MCF 10A (cell line): ENCODE measurements at regions of chr17 and their contacts with region 1.

Region 1: DNA sequence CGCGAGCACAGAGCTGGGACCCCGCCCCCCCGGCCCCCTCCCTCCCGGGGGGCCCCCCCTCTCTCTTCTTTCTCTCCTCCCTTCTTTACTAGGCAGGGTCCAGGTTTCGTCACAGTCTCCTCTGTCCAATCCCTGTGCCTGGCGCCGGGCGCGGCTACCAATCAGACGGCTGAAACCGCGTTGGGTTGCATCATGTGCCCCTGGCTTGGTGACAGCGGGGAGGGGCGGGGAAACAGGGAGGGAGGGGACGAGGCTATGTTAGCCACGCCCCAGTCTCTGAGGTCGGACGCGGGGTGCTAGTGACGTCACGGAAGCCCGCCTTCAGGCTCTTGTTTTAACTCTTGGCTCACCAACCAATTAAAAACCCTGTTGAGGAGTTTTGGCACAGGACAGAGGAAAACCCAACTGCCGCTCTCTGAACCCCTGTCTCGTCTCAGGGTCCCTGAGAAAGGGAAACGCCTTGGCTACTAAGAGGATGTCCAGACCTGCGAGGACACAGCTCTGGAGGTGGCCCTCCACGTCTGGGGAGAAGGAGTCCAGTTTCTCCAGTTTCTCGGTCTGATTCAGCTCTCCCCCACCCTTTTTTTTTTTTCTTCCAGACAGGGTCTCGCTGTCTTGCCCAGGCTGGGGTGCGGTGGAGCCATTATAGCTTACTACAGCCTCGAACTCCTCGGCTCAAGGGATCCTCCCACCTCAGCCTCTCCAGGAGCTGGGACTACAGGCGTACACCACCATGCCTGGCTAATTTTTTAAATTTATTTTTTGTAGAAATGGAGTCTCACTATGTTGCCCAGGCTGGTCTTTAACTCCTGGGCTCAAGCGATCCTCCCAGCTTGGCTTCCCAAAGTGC is 439 bp upstream of the PLEKHH3 start:
- DNase-seq: peak; percentile 100
- H3K4me3 Mint-ChIP-seq: peak overlapping the region; percentile 86
- H3K27ac Mint-ChIP-seq: peak overlapping the region; percentile 42
- H3K4me1 Mint-ChIP-seq: peaks cover 22% of the 10 kb centered on the region
- H3K27me3 Mint-ChIP-seq: no peaks in the 10 kb centered on the region
- CTCF ChIP-seq: no peak

Region 2: GRCh38 chr17:42566883-42567573 is 110.2 kb before region 1 on chr17 and contains the start of gene MLX:
- CTCF ChIA-PET with region 1: no interaction called
- POLR2A ChIA-PET with region 1: interaction called, 10 read pairs
- intact Hi-C with region 1: no loop called
- DNase-seq: peak; percentile 90
- H3K4me3 Mint-ChIP-seq: peak within 1 kb of the TSS; percentile 79
- H3K27ac Mint-ChIP-seq: peak within 1 kb of the TSS; percentile 90
- H3K4me1 Mint-ChIP-seq: peaks cover 13% of the 10 kb centered on the region
- H3K27me3 Mint-ChIP-seq: no peaks in the 10 kb centered on the region
- CTCF ChIP-seq: no peak
- total RNA-seq, gene MLX: 37.3 and 39.6 TPM in 2 replicates

Region 3: DNA sequence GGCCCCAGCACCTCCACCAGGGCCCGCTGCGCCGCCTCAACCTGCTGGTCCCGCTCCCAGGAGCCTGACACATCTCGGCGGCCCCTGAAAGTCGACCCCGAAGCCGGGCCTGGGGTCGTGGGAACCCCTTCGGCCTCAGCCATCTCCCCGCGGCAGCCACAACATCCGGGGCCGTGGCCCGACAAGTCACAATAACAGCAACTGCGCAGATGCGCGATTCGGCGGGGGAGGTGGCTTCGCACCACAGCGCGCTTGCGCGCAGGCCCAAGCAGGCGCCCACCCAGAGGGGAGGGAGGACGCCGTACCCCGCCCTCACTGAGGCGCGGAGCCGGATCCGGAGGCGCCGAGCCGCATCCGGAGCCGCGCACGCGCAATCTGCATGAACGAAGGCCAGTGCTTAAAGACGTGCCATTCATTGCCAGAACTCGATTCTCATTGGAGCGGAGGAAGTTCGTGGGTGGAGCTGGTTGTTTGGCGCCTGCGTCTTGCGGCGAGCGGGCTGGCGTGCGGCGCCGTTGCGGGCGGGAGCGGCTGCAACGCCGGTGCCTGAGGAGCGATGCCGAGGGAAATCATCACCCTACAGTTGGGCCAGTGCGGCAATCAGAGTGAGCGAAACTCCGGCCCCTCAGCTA is 67.9 kb before region 1 on chr17 and contains the starts of genes RETREG3 and TUBG1:
- CTCF ChIA-PET with region 1: interaction called, 6 read pairs
- POLR2A ChIA-PET with region 1: interaction called, 158 read pairs
- intact Hi-C with region 1: loop called (anchors 5 kb)
- DNase-seq: peak; percentile 99
- H3K4me3 Mint-ChIP-seq: peak within 1 kb of the TSS; percentile 99
- H3K27ac Mint-ChIP-seq: peak within 1 kb of the TSS; percentile 91
- H3K4me1 Mint-ChIP-seq: peaks cover 13% of the 10 kb centered on the region
- H3K27me3 Mint-ChIP-seq: no peaks in the 10 kb centered on the region
- CTCF ChIP-seq: peak; percentile 34
- total RNA-seq, gene RETREG3: 45.2 and 46.0 TPM in 2 replicates
- total RNA-seq, gene TUBG1: 57.8 and 60.2 TPM in 2 replicates

Region 4: GRCh38 chr17:42623732-42624596 is 53.3 kb before region 1 on chr17:
- CTCF ChIA-PET with region 1: interaction called, 61 read pairs
- POLR2A ChIA-PET with region 1: interaction called, 43 read pairs
- intact Hi-C with region 1: loop called (anchors 5 kb)
- DNase-seq: peak; percentile 75
- H3K4me3 Mint-ChIP-seq: no peak overlapping the region
- H3K27ac Mint-ChIP-seq: no peak overlapping the region
- H3K4me1 Mint-ChIP-seq: peaks cover 14% of the 10 kb centered on the region
- H3K27me3 Mint-ChIP-seq: no peaks in the 10 kb centered on the region
- CTCF ChIP-seq: no peak

Region 5: GRCh38 chr17:42659079-42659931 is 17.9 kb before region 1 on chr17 and contains the start of gene TUBG2:
- CTCF ChIA-PET with region 1: interaction called, 9 read pairs
- POLR2A ChIA-PET with region 1: interaction called, 58 read pairs
- intact Hi-C with region 1: no loop called
- DNase-seq: peak; percentile 88
- H3K4me3 Mint-ChIP-seq: peak within 1 kb of the TSS; percentile 88
- H3K27ac Mint-ChIP-seq: peak within 1 kb of the TSS; percentile 70
- H3K4me1 Mint-ChIP-seq: peaks cover 16% of the 10 kb centered on the region
- H3K27me3 Mint-ChIP-seq: no peaks in the 10 kb centered on the region
- CTCF ChIP-seq: no peak
- total RNA-seq, gene TUBG2: 21.3 and 23.4 TPM in 2 replicates